Activated CD4-positive, alpha-beta memory T cell treated with anti-CD3 and anti-CD28 coated beads for 36 hours (primary cell): ENCODE measurements at regions of chr5 and their contacts with region 1.

Region 1: DNA sequence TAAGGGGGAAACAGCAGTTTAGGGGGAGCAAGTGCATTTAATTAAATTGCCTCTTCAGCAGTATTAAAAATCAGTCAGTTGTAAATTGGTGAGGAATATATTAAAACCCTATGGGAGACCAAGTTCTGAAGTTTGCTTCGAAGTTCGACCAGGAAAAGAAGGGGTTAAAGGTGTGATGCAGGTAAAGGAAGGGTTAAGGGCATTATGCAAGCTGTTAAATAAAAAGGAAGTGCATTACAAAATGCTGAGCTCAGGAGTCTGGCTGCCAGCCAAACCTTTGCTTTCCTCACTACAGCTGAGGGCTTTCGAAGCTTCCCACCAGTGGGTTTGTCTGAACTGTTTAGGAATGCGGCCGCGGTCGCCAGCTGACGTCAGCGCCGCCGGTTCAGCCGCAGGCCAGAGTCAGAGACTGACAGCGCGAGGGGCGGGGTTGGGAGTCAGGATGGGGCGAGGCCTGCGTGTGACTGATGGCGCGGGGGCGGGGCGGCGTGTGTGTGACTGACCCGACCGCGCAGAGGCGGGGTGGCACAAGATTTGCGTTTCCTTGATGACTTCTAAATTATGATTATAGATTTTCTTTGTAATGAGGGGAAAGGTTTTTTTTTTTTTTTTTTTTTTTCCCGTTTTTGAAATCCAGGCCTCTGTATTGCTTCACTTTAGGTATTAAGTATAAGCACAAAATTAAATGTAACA is 76.6 kb downstream of the ZSWIM6 start:
- DNase-seq: peak; percentile 98
- H3K4me3 Mint-ChIP-seq: peak overlapping the region; percentile 55
- H3K27ac Mint-ChIP-seq: peak overlapping the region; percentile 50
- H3K4me1 Mint-ChIP-seq: peaks cover 29% of the 10 kb centered on the region
- H3K27me3 Mint-ChIP-seq: no peaks in the 10 kb centered on the region

Region 2: DNA sequence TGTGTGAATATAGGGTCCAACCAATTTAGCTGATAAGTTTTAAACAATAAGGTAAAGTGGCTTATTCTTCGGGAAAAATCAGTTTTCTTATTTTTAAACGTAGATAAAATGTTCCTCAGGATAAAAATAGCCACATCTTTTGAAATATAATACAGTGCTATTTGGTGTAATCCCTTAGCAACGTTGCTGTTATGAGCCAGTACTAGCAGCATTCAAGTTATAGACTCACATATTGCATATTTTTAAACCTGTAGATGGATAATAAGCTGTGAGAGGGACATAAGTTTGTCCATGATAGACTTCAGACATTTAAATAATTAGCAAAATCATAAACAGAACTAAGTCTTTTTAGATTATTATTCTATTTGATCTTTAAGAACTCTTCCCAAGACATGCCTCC is 1521.3 kb before region 1 on chr5:
- CTCF ChIA-PET with region 1: no interaction called
- POLR2A ChIA-PET with region 1: no interaction called
- intact Hi-C with region 1: no loop called
- DNase-seq: no peak
- H3K4me3 Mint-ChIP-seq: no peak overlapping the region
- H3K27ac Mint-ChIP-seq: no peak overlapping the region
- H3K4me1 Mint-ChIP-seq: no peaks in the 10 kb centered on the region
- H3K27me3 Mint-ChIP-seq: peaks cover 9% of the 10 kb centered on the region

Region 3: DNA sequence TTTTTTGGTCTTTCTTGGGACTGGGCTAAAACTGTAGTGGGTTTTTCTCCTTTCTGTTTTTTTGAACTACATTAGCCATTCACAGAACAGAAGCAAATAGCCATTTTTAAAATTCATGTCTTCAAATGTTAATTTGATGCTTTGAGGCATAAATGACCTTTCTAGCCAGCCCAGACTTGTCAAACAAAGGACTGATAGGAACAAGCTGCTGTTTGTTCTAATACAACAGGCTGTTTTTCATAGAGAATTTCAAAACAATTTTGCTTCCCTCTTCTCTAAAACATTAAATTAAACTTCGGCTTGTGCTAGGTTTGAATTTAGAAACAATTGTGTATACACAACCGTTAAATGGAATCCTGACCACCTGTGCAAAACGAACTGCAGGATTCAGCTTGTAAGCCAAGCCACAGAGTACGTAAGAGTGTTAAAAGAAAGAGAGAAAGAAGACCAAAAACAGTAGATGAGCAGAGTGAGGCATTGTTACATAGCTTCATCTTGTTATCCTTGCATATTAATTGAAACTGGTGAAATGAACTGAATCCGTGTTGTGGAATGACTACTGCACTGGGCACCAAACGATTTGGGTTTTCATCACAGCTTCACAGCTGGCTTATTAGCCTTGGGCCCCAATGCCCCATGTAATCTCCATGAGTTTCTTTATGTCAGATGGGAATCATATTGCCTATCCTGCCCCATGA is 23.4 kb after region 1 on chr5:
- CTCF ChIA-PET with region 1: no interaction called
- POLR2A ChIA-PET with region 1: no interaction called
- intact Hi-C with region 1: no loop called
- DNase-seq: no peak
- H3K4me3 Mint-ChIP-seq: no peak overlapping the region
- H3K27ac Mint-ChIP-seq: no peak overlapping the region
- H3K4me1 Mint-ChIP-seq: peaks cover 5% of the 10 kb centered on the region
- H3K27me3 Mint-ChIP-seq: no peaks in the 10 kb centered on the region

Region 4: GRCh38 chr5:61534481-61535267 is 126.1 kb after region 1 on chr5:
- CTCF ChIA-PET with region 1: no interaction called
- POLR2A ChIA-PET with region 1: no interaction called
- intact Hi-C with region 1: loop called (anchors 5 kb)
- DNase-seq: peak; percentile 28
- H3K4me3 Mint-ChIP-seq: no peak overlapping the region
- H3K27ac Mint-ChIP-seq: peak overlapping the region; percentile 54
- H3K4me1 Mint-ChIP-seq: peaks cover 18% of the 10 kb centered on the region
- H3K27me3 Mint-ChIP-seq: no peaks in the 10 kb centered on the region